HEK293 (cell line): ENCODE measurements at regions of chr17 and their contacts with region 1.

Region 1: GRCh38 chr17:8118769-8119580 is 661 bp upstream of the ALOXE3 start:
- H3K4me3 ChIP-seq: peak overlapping the region; percentile 48
- H3K27ac ChIP-seq: peak overlapping the region; percentile 72
- H3K4me1 ChIP-seq: peaks cover 2% of the 10 kb centered on the region
- CTCF ChIP-seq: peak; percentile 90

Region 2: DNA sequence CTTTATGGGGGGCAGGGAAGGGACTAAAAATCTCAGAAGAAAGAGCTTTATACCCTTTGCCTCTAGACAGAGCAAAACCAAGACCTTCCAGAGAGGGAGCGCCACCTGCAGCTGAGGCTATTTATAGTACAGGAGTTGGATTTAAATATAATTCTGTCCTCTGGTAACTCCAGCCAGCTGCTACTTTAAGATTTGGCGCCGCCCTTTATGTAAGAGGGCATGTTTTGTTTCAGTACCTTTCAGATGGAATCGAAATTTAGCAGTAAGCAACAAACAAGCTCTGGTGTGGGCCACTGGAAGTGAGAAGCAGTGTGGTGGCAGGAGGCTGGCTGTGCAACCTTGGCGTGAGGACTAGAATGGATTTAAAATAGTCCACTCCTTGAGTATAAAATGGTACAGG is 121.8 kb before region 1 on chr17:
- CTCF ChIA-PET with region 1: no interaction called
- POLR2A ChIA-PET with region 1: no interaction called
- H3K4me3 ChIP-seq: no peak overlapping the region
- H3K27ac ChIP-seq: no peak overlapping the region
- H3K4me1 ChIP-seq: no peaks in the 10 kb centered on the region
- CTCF ChIP-seq: no peak

Region 3: DNA sequence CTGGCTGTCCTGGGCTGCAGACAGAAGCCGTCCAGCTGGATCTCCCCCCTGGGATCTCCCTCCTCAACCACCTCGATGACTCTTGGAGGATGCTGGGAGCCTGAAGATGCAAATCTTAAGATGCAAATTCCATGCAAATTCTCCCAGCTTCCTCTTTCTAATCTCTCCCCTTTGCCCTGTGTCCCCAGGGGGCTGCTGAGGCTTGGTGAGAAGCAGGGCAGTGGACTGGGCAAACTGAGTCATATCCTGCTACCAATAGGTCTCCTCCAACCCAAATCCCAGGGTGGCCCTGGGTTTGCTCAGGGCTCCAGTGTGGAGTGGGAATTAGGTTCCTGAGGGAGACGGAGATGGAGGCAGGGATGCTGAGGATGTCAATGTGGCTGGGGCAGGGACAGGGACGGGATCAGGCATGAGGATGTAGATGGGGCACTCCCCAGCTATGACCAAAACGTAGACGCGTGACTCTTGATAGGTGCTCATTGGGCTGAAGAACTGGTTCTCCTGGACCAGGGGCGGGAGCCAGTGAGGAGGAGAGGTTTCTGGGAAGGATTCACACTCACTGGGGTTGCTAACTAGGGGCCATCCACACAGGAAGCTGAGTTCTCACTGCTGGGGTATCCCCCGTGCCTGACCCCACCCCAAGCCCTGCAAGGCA is 27.8 kb before region 1 on chr17:
- CTCF ChIA-PET with region 1: interaction called, 53 read pairs
- POLR2A ChIA-PET with region 1: interaction called, 5 read pairs
- H3K4me3 ChIP-seq: no peak overlapping the region
- H3K27ac ChIP-seq: no peak overlapping the region
- H3K4me1 ChIP-seq: no peaks in the 10 kb centered on the region
- CTCF ChIP-seq: no peak

Region 4: GRCh38 chr17:8138672-8139371 is 19.8 kb after region 1 on chr17:
- CTCF ChIA-PET with region 1: interaction called, 33 read pairs
- POLR2A ChIA-PET with region 1: interaction called, 15 read pairs
- H3K4me3 ChIP-seq: peak overlapping the region; percentile 71
- H3K27ac ChIP-seq: peak overlapping the region; percentile 48
- H3K4me1 ChIP-seq: 0 out of 2 replicates have a peak, but pooled peaks cover 4% of the 10 kb centered on the region
- CTCF ChIP-seq: peak; percentile 92

Region 5: GRCh38 chr17:8173056-8173870 is 54.3 kb after region 1 on chr17:
- CTCF ChIA-PET with region 1: interaction called, 10 read pairs
- POLR2A ChIA-PET with region 1: interaction called, 27 read pairs
- H3K4me3 ChIP-seq: peak overlapping the region; percentile 53
- H3K27ac ChIP-seq: peak overlapping the region; percentile 89
- H3K4me1 ChIP-seq: peaks cover 10% of the 10 kb centered on the region
- CTCF ChIP-seq: no peak

Region 6: DNA sequence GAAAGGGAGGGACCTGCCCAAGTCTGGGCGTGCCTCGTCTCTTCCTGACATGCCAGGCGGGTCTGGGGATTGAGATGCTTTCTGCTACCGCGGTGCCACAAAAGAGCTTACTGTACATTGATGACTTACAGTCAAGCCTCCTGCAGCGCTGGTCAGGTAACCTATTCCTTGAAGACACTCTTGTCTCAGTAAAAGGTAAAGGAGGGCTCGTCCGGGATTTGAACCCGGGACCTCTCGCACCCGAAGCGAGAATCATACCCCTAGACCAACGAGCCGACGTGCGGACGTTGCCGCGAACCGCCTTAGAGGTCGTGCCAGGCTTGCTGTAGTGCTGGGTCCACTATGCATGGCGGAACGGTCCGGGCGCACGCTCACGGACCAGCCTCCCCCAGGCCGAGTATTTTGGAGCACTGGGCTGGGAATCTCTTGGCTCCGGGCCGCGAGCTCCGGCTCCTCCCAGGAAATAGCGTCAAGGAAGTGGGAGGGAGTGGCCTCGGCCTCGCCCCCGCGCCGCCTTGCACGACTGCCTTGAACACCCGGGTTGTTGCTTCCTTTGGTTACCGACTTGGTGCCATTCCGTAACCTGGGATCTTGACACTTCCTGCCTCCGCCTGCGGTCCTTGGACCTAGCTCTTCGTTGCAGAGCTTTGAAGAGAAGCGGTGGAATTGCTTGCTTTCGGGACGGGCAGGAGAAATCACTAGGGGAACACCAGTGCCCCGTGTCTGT is 103.8 kb after region 1 on chr17:
- CTCF ChIA-PET with region 1: interaction called, 15 read pairs
- POLR2A ChIA-PET with region 1: interaction called, 32 read pairs
- H3K4me3 ChIP-seq: peak overlapping the region; percentile 78
- H3K27ac ChIP-seq: peak overlapping the region; percentile 70
- H3K4me1 ChIP-seq: peaks cover 12% of the 10 kb centered on the region
- CTCF ChIP-seq: no peak